H1 (cell line): ENCODE measurements at regions of chr16 and their contacts with region 1.

Region 1: GRCh38 chr16:86519649-86520316 is 9.5 kb downstream of the FOXF1 start:
- DNase-seq: peak in 1 of 2 experiments; percentile 87
- H3K4me3 ChIP-seq: no peak overlapping the region
- H3K27ac ChIP-seq: no peak overlapping the region
- H3K4me1 ChIP-seq: peaks cover 3 to 9% (median 5%) of the 10 kb centered on the region in 4 experiments; a peak in 6 of 7 replicates
- H3K27me3 ChIP-seq: peaks cover 41 to 55% (median 47%) of the 10 kb centered on the region in 4 experiments
- CTCF ChIP-seq: peak; percentile 79 to 88 (median 83)
- EP300 ChIP-seq: no peak
- POLR2A ChIP-seq: no peak
- RAD21 ChIP-seq: peak; percentile 86 to 90

Region 2: GRCh38 chr16:86022381-86022960 is 497.3 kb before region 1 on chr16:
- CTCF ChIA-PET with region 1: interaction called, 14 read pairs
- POLR2A ChIA-PET with region 1: no interaction called
- DNase-seq: no peak
- H3K4me3 ChIP-seq: no peak overlapping the region
- H3K27ac ChIP-seq: no peak overlapping the region
- H3K4me1 ChIP-seq: no peaks in the 10 kb centered on the region
- H3K27me3 ChIP-seq: no peaks in the 10 kb centered on the region; a peak in 1 of 7 replicates
- CTCF ChIP-seq: no peak
- EP300 ChIP-seq: no peak
- POLR2A ChIP-seq: no peak
- RAD21 ChIP-seq: no peak

Region 3: DNA sequence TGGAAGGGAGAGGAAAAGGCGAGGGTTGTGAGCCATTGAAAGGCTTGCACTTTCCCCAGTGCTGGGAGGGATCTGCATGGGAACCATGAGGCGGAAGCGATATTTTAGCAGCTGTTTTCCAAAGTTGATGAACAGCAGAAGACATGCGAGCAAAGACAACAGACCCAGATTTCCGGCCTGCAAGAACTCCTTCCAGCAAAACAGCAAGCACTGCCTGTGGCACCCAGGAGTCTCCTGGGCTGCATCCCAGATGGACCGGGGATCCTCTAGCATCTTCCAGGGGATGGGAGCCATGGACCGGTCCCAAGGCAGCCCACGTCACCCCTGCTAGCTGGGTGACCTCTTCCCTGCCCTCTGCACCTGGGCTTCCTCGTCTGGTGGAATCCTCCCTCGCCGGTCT is 458.1 kb before region 1 on chr16:
- CTCF ChIA-PET with region 1: interaction called, 10 read pairs
- POLR2A ChIA-PET with region 1: no interaction called
- DNase-seq: no peak
- H3K4me3 ChIP-seq: no peak overlapping the region
- H3K27ac ChIP-seq: no peak overlapping the region
- H3K4me1 ChIP-seq: no peaks in the 10 kb centered on the region
- H3K27me3 ChIP-seq: peaks cover 0 to 3% (median 0%) of the 10 kb centered on the region in 4 experiments; a peak in 1 of 7 replicates
- CTCF ChIP-seq: no peak
- EP300 ChIP-seq: no peak
- POLR2A ChIP-seq: no peak
- RAD21 ChIP-seq: no peak

Region 4: GRCh38 chr16:86252596-86252995 is 267.2 kb before region 1 on chr16:
- CTCF ChIA-PET with region 1: interaction called, 61 read pairs
- POLR2A ChIA-PET with region 1: no interaction called
- DNase-seq: peak; percentile 9 to 82
- H3K4me3 ChIP-seq: no peak overlapping the region
- H3K27ac ChIP-seq: no peak overlapping the region
- H3K4me1 ChIP-seq: no peaks in the 10 kb centered on the region
- H3K27me3 ChIP-seq: no peaks in the 10 kb centered on the region
- CTCF ChIP-seq: peak; percentile 84 to 85 (median 85)
- EP300 ChIP-seq: no peak; a peak in 1 of 3 replicates
- POLR2A ChIP-seq: no peak
- RAD21 ChIP-seq: peak; percentile 89 to 91

Region 5: GRCh38 chr16:86491256-86492023 is 28.3 kb before region 1 on chr16:
- CTCF ChIA-PET with region 1: interaction called, 30 read pairs
- POLR2A ChIA-PET with region 1: interaction called, 4 read pairs
- DNase-seq: no peak
- H3K4me3 ChIP-seq: no peak overlapping the region
- H3K27ac ChIP-seq: no peak overlapping the region
- H3K4me1 ChIP-seq: peaks cover 4 to 17% (median 8%) of the 10 kb centered on the region in 4 experiments; a peak in 6 of 7 replicates
- H3K27me3 ChIP-seq: peaks cover 52 to 71% (median 65%) of the 10 kb centered on the region in 4 experiments
- CTCF ChIP-seq: no peak
- EP300 ChIP-seq: no peak
- POLR2A ChIP-seq: no peak
- RAD21 ChIP-seq: no peak

Region 6: DNA sequence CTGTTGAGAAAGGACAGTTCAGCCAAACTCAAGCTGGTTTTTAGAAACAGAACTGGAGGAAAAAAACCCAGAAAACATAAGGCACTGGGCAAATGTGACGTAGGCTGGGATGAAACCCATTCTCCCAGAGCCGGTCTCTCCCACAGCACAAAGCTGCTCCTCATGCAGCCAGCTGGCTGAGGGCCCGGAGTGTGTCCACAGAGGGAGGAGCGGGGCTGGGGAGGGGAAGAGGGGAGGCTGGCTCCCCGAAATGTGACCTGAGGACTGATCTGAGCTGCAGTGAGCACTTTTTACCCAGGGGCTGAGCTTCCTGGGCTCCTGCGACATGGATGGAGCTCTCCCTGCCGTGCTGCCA is 11.4 kb after region 1 on chr16:
- CTCF ChIA-PET with region 1: interaction called, 16 read pairs
- POLR2A ChIA-PET with region 1: no interaction called
- DNase-seq: no peak
- H3K4me3 ChIP-seq: no peak overlapping the region
- H3K27ac ChIP-seq: no peak overlapping the region
- H3K4me1 ChIP-seq: no peaks in the 10 kb centered on the region
- H3K27me3 ChIP-seq: no peaks in the 10 kb centered on the region
- CTCF ChIP-seq: no peak
- EP300 ChIP-seq: no peak
- POLR2A ChIP-seq: no peak
- RAD21 ChIP-seq: no peak